ENCODE measurements at regions of chr10 and their contacts with region 1.

Region 1: GRCh38 chr10:43461950-43462349 is 25.0 kb downstream of the ZNF487 start:
- DNase-seq: peak in 1 of 2 donors; percentile 91
- ATAC-seq: peak; percentile 83 to 91 (median 87)
- H3K4me3 ChIP-seq: no peak overlapping the region
- H3K4me3 Mint-ChIP-seq: no peak overlapping the region
- H3K27ac ChIP-seq: no peak overlapping the region
- H3K27ac Mint-ChIP-seq: peak overlapping the region in 1 of 2 donors; percentile 40
- H3K4me1 ChIP-seq: peaks cover 8% of the 10 kb centered on the region
- H3K4me1 Mint-ChIP-seq: peaks cover 7 to 13% of the 10 kb centered on the region in 2 donors
- H3K27me3 ChIP-seq: no peaks in the 10 kb centered on the region
- H3K27me3 Mint-ChIP-seq: no peaks in the 10 kb centered on the region
- CTCF ChIP-seq: peak; percentile 71

Region 2: DNA sequence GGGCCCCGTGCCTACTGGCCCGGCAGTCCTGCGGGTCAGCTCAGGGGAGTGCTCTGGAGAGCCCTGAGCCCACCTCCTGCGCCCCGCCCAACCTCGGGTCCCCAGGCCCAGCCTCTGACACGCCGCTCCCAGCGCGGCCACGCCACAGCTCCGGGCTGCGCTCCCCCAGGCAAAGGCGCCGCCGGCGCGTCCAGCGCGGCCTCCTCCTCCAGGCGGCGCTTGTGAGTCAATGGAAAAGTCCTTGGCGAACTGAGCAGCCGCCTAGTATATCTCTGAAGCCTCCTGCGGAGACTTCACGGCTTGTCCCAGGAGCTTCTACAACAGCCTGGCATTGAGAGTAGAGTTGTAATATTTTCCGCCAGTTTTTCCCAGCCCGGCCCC is 708.8 kb before region 1 on chr10:
- intact Hi-C with region 1: loop called (anchors 5 kb)
- DNase-seq: peak; percentile 50 to 71
- ATAC-seq: peak; percentile 58 to 77 (median 73)
- H3K4me3 ChIP-seq: peak overlapping the region; percentile 31
- H3K4me3 Mint-ChIP-seq: peak overlapping the region; percentile 84
- H3K27ac ChIP-seq: no peak overlapping the region
- H3K27ac Mint-ChIP-seq: no peak overlapping the region
- H3K4me1 ChIP-seq: peaks cover 19% of the 10 kb centered on the region
- H3K4me1 Mint-ChIP-seq: peaks cover 8 to 13% of the 10 kb centered on the region in 2 donors
- H3K27me3 ChIP-seq: peaks cover 39% of the 10 kb centered on the region
- H3K27me3 Mint-ChIP-seq: peaks cover 35 to 49% of the 10 kb centered on the region in 2 donors
- CTCF ChIP-seq: peak; percentile 64

Region 3: GRCh38 chr10:43204943-43205671 is 256.8 kb before region 1 on chr10:
- intact Hi-C with region 1: loop called (anchors 5 kb)
- DNase-seq: peak; percentile 19 to 75
- ATAC-seq: peak; percentile 45 to 55 (median 54)
- H3K4me3 ChIP-seq: no peak overlapping the region
- H3K4me3 Mint-ChIP-seq: no peak overlapping the region
- H3K27ac ChIP-seq: no peak overlapping the region
- H3K27ac Mint-ChIP-seq: peak overlapping the region in 1 of 2 donors; percentile 66
- H3K4me1 ChIP-seq: peaks cover 43% of the 10 kb centered on the region
- H3K4me1 Mint-ChIP-seq: peaks cover 6 to 17% of the 10 kb centered on the region in 2 donors
- H3K27me3 ChIP-seq: no peaks in the 10 kb centered on the region
- H3K27me3 Mint-ChIP-seq: no peaks in the 10 kb centered on the region
- CTCF ChIP-seq: peak; percentile 78

Region 4: GRCh38 chr10:43265799-43266721 is 195.9 kb before region 1 on chr10:
- intact Hi-C with region 1: no loop called
- DNase-seq: peak; percentile 22 to 64
- ATAC-seq: peak; percentile 40 to 66 (median 59)
- H3K4me3 ChIP-seq: peak overlapping the region; percentile 24
- H3K4me3 Mint-ChIP-seq: peak overlapping the region; percentile 78
- H3K27ac ChIP-seq: no peak overlapping the region
- H3K27ac Mint-ChIP-seq: no peak overlapping the region
- H3K4me1 ChIP-seq: peaks cover 10% of the 10 kb centered on the region
- H3K4me1 Mint-ChIP-seq: peaks cover 0 to 5% of the 10 kb centered on the region in 2 donors
- H3K27me3 ChIP-seq: peaks cover 23% of the 10 kb centered on the region
- H3K27me3 Mint-ChIP-seq: peaks cover 35 to 43% of the 10 kb centered on the region in 2 donors
- CTCF ChIP-seq: no peak

Region 5: DNA sequence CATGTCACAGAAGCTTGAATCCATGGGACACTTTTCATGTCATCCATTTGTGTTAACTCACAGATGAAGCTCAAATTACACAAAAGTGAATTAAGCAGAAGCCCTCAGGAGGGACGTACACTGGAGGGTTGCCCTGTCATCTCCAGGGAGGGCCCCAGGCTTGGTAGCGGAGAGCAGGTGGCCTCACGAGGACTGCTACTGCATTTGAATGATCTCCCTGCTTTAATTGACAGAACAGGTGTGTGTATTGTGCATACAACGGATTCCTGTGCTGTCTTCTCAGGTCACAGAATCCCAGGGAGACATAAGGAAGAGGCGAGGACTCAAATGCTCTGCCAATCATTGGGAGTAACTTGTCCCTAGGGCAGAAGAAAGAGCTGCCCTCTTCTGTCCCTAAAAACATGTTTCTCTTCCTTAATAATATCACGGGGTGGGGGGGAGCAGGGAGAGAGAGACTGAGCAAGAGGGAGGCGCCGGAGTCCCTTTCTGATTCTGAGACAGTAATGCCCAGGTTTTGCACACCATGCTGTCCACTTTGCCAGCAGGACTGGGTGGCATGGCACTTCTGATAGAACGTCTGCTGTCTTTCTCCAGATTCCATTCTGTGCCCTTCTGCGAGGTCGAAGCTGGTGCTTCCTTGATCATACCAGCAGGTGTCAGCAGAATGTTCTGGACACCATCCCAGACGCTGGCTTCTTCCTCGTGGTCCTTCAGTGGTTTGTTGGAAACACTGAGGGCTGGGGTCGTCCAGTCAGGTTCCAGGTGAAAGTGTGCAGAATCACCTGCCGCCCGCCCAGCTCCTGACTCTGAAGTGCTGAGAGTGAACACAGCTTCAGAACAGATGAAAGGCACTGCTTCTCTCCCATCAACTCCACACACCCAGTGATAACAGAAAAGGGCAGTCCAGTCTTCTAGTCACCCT is 168.9 kb before region 1 on chr10:
- intact Hi-C with region 1: loop called (anchors 1 kb)
- DNase-seq: peak in 1 of 2 donors; percentile 75
- ATAC-seq: peak; percentile 66 to 83 (median 73)
- H3K4me3 ChIP-seq: no peak overlapping the region
- H3K4me3 Mint-ChIP-seq: no peak overlapping the region
- H3K27ac ChIP-seq: peak overlapping the region; percentile 51
- H3K27ac Mint-ChIP-seq: peak overlapping the region in 1 of 2 donors; percentile 14
- H3K4me1 ChIP-seq: peaks cover 33% of the 10 kb centered on the region
- H3K4me1 Mint-ChIP-seq: peaks cover 11 to 22% of the 10 kb centered on the region in 2 donors
- H3K27me3 ChIP-seq: no peaks in the 10 kb centered on the region
- H3K27me3 Mint-ChIP-seq: peaks cover 0 to 4% of the 10 kb centered on the region in 2 donors
- CTCF ChIP-seq: peak; percentile 54